ENCODE measurements at regions of chr1 and their contacts with region 1.

Region 1: GRCh38 chr1:171313835-171314320 is at the start of gene FMO4:
- ATAC-seq: peak; percentile 75 to 100 (median 98)
- H3K4me3 ChIP-seq: no peak within 1 kb of the TSS
- H3K27ac ChIP-seq: no peak within 1 kb of the TSS
- H3K4me1 ChIP-seq: no peaks in the 10 kb centered on the region
- total RNA-seq, gene FMO4: 0.05 to 11.2 (median 1.4) TPM

Region 2: DNA sequence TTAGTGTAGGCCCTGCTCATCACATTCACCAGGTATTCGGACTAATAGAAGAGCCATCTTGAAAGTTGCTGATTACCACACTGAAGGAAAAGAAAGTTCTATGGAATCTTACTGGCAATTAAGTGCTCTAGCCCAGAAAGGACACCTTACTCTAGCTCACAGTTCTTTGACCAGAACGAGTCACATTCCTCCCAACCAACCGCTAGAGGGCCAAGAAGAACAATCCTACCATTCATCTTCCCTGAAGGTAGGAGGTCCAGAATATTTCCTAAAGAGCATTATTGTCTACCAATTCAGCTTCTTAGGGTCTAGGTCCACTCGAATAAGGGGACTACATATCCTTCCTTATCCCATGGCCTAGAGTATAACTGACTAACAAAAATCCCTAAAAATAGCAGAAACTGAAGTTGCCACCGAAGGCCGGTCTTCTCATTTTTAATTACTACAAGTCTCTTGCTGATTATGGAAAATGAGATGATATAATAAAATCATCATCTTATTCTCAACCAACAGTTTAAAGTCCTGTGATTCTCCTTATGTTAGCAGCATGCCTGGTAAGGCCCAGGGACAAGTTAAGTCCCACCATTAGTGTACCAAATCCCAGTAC is 68.3 kb before region 1 on chr1:
- in situ Hi-C with region 1: loop called in 1 of 9 experiments (anchors 10 kb)
- ATAC-seq: peak in 3 of 8 experiments; percentile 82 to 86 (median 84)
- H3K4me3 ChIP-seq: no peak overlapping the region
- H3K27ac ChIP-seq: no peak overlapping the region
- H3K4me1 ChIP-seq: no peaks in the 10 kb centered on the region

Region 3: GRCh38 chr1:171754353-171754705 is 440.5 kb after region 1 on chr1:
- in situ Hi-C with region 1: no loop called
- ATAC-seq: peak in 6 of 8 experiments; percentile 60 to 93 (median 82)
- H3K4me3 ChIP-seq: no peak overlapping the region
- H3K27ac ChIP-seq: no peak overlapping the region
- H3K4me1 ChIP-seq: peaks cover 0 to 4% of the 10 kb centered on the region in 2 donors

Measured in motor neuron (in vitro differentiated cells).